ENCODE measurements at regions of chr17 and their contacts with region 1.

Region 1: GRCh38 chr17:75319904-75320691 is 30.9 kb upstream of the SLC25A19 start:
- DNase-seq: no peak
- H3K4me3 ChIP-seq: no peak overlapping the region
- H3K27ac ChIP-seq: no peak overlapping the region
- H3K4me1 ChIP-seq: no peaks in the 10 kb centered on the region
- H3K27me3 ChIP-seq: no peaks in the 10 kb centered on the region
- CTCF ChIP-seq: no peak
- EP300 ChIP-seq: no peak; a peak in 1 of 4 replicates
- RAD21 ChIP-seq: no peak

Region 2: DNA sequence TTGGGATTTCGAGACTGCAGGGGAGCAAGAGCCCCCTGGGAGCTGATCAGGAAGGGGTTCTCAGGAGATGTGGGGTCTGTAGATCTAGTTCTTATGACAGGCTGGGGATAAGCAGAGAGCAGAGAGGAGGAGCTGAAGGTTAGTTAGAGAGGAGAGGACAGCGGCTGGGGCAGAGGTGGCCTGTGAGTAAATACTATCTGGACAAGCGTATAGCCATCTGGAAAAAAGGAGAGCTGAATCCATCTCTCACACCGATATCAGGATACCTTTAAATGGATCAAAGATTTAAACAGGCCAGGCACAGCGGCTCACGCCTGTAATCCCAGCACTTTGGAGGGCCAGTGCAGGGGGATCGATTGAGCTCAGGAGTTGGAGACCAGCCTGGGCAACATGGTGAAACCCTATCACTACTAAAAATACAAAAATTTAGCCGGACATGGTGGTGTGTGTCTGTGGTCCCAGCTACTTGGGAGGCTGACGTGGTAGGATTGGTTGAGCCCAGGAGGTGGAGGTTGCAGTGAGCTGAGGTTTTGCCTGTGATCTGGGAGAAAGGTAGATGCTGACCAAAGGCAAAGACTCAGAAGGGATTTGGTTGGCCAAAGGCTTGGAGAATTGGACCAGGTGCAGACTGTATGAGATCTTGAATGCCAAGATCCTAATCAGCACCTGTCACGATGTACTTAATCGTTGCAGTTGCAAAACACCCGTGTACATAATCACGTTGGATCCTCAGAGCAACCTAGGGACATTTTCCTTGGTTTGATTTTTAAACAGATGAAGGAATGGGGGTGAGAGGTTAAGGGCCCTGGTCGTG is 11.9 kb before region 1 on chr17:
- CTCF ChIA-PET with region 1: interaction called, 45 read pairs
- POLR2A ChIA-PET with region 1: no interaction called
- DNase-seq: no peak
- H3K4me3 ChIP-seq: no peak overlapping the region
- H3K27ac ChIP-seq: no peak overlapping the region
- H3K4me1 ChIP-seq: no peaks in the 10 kb centered on the region
- H3K27me3 ChIP-seq: no peaks in the 10 kb centered on the region
- CTCF ChIP-seq: no peak
- EP300 ChIP-seq: no peak
- RAD21 ChIP-seq: no peak

Region 3: DNA sequence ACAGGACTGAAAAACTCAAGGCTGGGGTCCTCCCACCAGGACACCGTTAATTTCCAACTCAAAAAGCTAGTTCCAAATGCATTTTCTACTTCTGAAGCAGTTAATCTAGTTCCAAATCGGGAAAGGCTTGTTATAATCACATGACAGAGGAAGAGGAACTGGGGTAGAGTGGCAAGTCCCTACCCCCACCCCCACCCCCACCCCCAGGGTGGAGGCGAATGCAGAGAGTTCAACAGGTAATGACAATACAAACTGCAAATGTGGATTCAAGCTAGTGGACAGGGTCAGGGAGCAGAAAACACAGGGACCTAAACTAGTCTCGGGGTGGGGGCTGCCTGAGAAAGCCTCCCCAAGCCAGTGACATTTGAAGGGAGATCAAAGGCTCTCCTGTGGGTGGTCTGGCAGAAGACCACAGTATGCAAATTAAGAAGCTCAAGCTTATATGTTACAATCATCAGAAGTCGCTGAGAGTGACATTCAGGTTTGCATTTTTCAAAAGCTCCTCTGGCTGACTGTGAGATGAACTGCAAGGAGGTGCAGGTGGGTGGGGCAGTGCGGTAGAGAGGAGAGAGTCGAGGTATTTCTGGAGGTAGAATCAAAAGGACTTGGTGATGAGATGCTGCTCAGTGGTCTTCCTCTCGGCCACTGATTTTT is 25.5 kb after region 1 on chr17:
- CTCF ChIA-PET with region 1: interaction called, 56 read pairs
- POLR2A ChIA-PET with region 1: no interaction called
- DNase-seq: no peak
- H3K4me3 ChIP-seq: no peak overlapping the region
- H3K27ac ChIP-seq: no peak overlapping the region
- H3K4me1 ChIP-seq: peaks cover 11% of the 10 kb centered on the region in 2 experiments; a peak in 1 of 4 replicates
- H3K27me3 ChIP-seq: no peaks in the 10 kb centered on the region
- CTCF ChIP-seq: no peak
- EP300 ChIP-seq: no peak
- RAD21 ChIP-seq: no peak

Region 4: DNA sequence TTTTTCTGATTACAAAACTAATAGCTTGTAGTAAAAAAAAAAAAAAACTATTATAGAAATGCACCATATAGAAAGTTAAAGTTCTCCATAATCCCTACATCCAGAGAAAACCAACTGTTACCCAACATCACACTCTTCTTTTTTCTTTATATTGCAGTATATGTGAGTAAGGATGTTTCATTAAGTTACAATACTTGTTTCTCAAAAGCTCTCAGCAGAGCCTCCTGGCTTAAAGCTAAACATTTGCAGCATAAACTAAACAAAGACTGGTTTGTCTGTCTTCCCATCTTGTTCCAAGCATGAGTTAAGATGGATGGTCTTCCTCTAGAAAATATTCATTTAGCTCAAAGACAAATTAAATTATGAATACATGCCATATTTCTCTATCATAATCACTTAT is 60.2 kb after region 1 on chr17:
- CTCF ChIA-PET with region 1: interaction called, 35 read pairs
- POLR2A ChIA-PET with region 1: no interaction called
- DNase-seq: no peak
- H3K4me3 ChIP-seq: no peak overlapping the region
- H3K27ac ChIP-seq: peak overlapping the region in 1 of 2 experiments; percentile 7; a peak in 2 of 4 replicates
- H3K4me1 ChIP-seq: no peaks in the 10 kb centered on the region
- H3K27me3 ChIP-seq: no peaks in the 10 kb centered on the region
- CTCF ChIP-seq: no peak
- EP300 ChIP-seq: no peak
- RAD21 ChIP-seq: no peak

Region 5: GRCh38 chr17:75405365-75406221 is 85.5 kb after region 1 on chr17 and contains the start of gene GRB2:
- CTCF ChIA-PET with region 1: interaction called, 65 read pairs
- POLR2A ChIA-PET with region 1: interaction called, 3 read pairs
- DNase-seq: peak; percentile 100
- H3K4me3 ChIP-seq: peak within 1 kb of the TSS; percentile 82 to 86
- H3K27ac ChIP-seq: peak within 1 kb of the TSS; percentile 69 to 70
- H3K4me1 ChIP-seq: peaks cover 4 to 6% of the 10 kb centered on the region in 2 experiments; a peak in 3 of 4 replicates
- H3K27me3 ChIP-seq: no peaks in the 10 kb centered on the region; the same call in 1 of the 2 replicates
- CTCF ChIP-seq: no peak
- EP300 ChIP-seq: no peak; a peak in 1 of 4 replicates
- RAD21 ChIP-seq: no peak
- polyA plus RNA-seq, gene GRB2: 81.6 and 89.6 TPM in 2 replicates

Measured in SK-N-SH (cell line).